ENCODE measurements at regions of chr15 and their contacts with region 1.

Region 1: GRCh38 chr15:37995461-37996347 is 61.3 kb downstream of the TMCO5A start:
- DNase-seq: peak in 1 of 2 experiments; percentile 42
- H3K4me3 ChIP-seq: no peak overlapping the region
- H3K4me3 Mint-ChIP-seq: no peak overlapping the region
- H3K27ac Mint-ChIP-seq: no peak overlapping the region
- H3K4me1 ChIP-seq: no peaks in the 10 kb centered on the region
- H3K4me1 Mint-ChIP-seq: no peaks in the 10 kb centered on the region
- H3K27me3 ChIP-seq: no peaks in the 10 kb centered on the region
- H3K27me3 Mint-ChIP-seq: peaks cover 11% of the 10 kb centered on the region
- CTCF ChIP-seq: peak; percentile 52

Region 2: DNA sequence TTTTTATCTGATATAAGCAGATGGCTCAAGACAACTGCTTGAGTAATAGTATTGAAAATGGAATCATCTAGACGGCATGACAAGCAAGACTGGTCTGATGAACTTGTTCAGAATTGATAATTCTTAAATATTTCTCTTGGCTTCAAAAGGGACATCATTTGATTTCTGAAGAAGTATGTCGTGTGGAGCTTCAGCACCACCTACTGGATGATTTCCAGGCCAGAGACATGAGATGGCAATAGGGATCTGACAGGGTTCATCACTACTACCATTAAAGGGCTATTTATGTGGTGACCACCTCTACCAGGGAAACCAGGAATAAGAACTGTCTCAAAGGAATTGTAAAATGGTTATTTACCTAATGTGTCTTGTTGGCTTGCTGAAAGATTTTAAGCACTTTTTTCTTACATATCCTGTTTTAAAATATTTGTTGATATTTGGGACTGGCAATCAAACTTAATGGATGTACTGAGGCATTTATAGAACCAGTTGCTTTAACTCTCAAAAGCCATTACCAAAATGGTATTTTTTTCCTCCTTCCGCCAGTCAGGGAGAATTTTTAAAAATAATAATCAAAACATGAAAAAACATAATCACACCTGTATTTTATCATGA is 358.7 kb after region 1 on chr15:
- CTCF ChIA-PET with region 1: interaction called, 3 read pairs
- POLR2A ChIA-PET with region 1: no interaction called
- intact Hi-C with region 1: loop called (anchors 2 kb)
- DNase-seq: peak; percentile 58 to 70
- H3K4me3 ChIP-seq: no peak overlapping the region
- H3K4me3 Mint-ChIP-seq: no peak overlapping the region
- H3K27ac Mint-ChIP-seq: no peak overlapping the region
- H3K4me1 ChIP-seq: no peaks in the 10 kb centered on the region
- H3K4me1 Mint-ChIP-seq: no peaks in the 10 kb centered on the region
- H3K27me3 ChIP-seq: no peaks in the 10 kb centered on the region
- H3K27me3 Mint-ChIP-seq: no peaks in the 10 kb centered on the region
- CTCF ChIP-seq: peak; percentile 69 to 70

Region 3: GRCh38 chr15:38389924-38390542 is 394.3 kb after region 1 on chr15:
- CTCF ChIA-PET with region 1: interaction called, 3 read pairs
- POLR2A ChIA-PET with region 1: no interaction called
- intact Hi-C with region 1: loop called (anchors 2 kb)
- DNase-seq: peak; percentile 67 to 78
- H3K4me3 ChIP-seq: no peak overlapping the region
- H3K4me3 Mint-ChIP-seq: no peak overlapping the region
- H3K27ac Mint-ChIP-seq: no peak overlapping the region
- H3K4me1 ChIP-seq: no peaks in the 10 kb centered on the region
- H3K4me1 Mint-ChIP-seq: no peaks in the 10 kb centered on the region
- H3K27me3 ChIP-seq: no peaks in the 10 kb centered on the region
- H3K27me3 Mint-ChIP-seq: peaks cover 11% of the 10 kb centered on the region
- CTCF ChIP-seq: peak; percentile 65 to 85

Region 4: DNA sequence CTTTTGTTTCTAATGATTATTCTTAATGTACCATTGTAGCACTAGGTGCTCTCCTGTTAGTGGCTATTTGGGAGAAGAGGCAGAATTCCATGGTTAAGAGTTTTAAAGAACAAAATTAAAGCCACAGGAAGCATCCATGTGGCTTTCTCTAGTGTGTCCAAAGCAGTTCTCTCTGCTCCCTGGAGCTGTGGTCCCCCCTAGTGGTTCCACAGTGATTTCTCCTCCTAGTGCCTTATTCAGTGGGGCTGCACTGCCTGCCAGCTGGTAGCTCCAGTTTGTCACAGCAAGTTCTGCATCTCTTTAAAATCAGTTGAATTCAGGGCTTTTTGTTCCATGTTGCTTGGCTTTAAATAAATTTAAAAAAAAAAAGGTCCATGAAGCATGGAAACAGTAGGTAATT is 418.7 kb after region 1 on chr15:
- CTCF ChIA-PET with region 1: interaction called, 3 read pairs
- POLR2A ChIA-PET with region 1: no interaction called
- intact Hi-C with region 1: loop called (anchors 1 kb)
- DNase-seq: peak; percentile 56 to 70
- H3K4me3 ChIP-seq: no peak overlapping the region
- H3K4me3 Mint-ChIP-seq: no peak overlapping the region
- H3K27ac Mint-ChIP-seq: no peak overlapping the region
- H3K4me1 ChIP-seq: no peaks in the 10 kb centered on the region
- H3K4me1 Mint-ChIP-seq: peaks cover 6% of the 10 kb centered on the region
- H3K27me3 ChIP-seq: no peaks in the 10 kb centered on the region
- H3K27me3 Mint-ChIP-seq: no peaks in the 10 kb centered on the region
- CTCF ChIP-seq: peak; percentile 65 to 67

Region 5: DNA sequence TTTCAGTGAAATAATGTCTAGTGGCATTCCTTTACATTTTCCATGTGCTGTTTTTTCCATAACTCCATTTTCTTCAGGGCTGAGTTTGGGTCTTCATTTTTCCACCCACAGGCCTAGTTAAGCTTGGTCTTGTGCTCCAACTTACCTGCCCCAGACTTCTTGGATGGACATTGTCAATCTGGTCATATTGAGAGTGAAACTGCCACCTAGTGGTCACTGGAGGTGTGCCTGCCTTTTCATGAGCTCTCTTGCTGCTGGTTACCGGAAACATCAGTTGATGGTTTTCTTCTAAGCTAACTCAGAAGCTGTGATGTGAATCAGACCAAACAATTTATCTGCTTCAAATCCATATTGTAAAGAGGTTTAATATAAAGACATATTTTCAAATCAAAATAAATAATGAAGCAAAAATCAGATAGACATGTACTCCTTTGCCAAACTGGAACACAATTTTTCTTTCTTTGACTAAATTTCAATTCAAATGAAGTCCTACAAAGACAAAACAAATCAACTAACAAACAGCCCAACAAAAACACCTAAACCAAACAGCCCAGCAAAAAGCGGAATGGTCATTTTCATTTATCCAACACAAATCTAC is 704.0 kb after region 1 on chr15:
- CTCF ChIA-PET with region 1: no interaction called
- POLR2A ChIA-PET with region 1: no interaction called
- intact Hi-C with region 1: loop called (anchors 5 kb)
- DNase-seq: peak; percentile 62 to 64
- H3K4me3 ChIP-seq: no peak overlapping the region
- H3K4me3 Mint-ChIP-seq: no peak overlapping the region
- H3K27ac Mint-ChIP-seq: no peak overlapping the region
- H3K4me1 ChIP-seq: peaks cover 23% of the 10 kb centered on the region
- H3K4me1 Mint-ChIP-seq: peaks cover 31% of the 10 kb centered on the region
- H3K27me3 ChIP-seq: no peaks in the 10 kb centered on the region
- H3K27me3 Mint-ChIP-seq: no peaks in the 10 kb centered on the region
- CTCF ChIP-seq: peak; percentile 71 to 72

Measured in Caco-2 (cell line).